Gastrocnemius medialis (tissue), 4 donors: ENCODE measurements at regions of chr16 and their contacts with region 1.

Region 1: DNA sequence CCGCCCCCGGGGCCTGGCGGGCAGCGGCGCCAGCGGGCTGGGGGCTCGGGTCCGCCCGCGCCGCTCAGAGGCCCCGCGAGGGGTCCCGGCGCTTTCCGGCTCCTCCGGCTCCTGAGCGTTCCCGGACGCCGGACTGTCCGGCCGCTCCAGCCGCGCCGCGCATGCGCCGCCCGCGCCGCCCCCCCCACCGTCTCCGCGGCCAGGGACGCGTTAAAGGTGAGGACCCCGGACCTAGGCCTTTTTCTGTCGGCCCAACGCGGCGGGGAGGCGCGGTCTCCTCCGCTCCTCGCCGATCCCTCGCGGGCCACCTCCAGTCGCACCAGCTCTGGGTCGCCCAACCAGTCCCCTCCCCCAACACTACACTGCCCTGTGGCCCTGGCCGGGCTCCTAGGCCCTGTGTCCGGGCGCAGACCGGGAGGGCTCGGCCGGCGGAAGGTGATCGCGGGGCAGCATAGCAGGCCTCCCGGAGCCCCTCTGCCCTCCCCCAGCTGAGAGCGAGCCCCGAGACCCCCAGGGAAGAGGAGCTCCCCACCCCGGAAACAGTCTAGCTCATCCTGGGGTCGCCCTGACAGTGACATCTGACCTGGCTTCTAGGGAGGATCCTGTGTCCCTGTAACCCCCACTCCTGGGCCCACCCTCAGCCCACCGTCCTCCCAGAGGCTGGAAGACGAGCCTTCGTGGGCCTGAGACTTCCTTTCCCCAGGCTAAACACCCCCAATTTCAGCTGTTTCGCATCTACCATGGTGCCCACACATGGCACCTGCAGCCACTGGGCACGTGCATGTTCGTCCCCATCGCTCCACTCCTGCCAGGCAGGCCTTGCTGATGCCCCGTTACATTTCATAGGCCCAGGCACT is 14.6 kb upstream of the BCAR1 start:
- DNase-seq: peak; percentile 70 to 86
- ATAC-seq: peak; percentile 37 to 51
- H3K4me3 ChIP-seq: peak overlapping the region; percentile 75 to 97 (median 90)
- H3K27ac ChIP-seq: peak overlapping the region; percentile 95 to 100 (median 98)
- H3K4me1 ChIP-seq: peaks cover 56 to 62% of the 10 kb centered on the region in 2 donors
- H3K27me3 ChIP-seq: no peaks in the 10 kb centered on the region
- CTCF ChIP-seq: no peak
- POLR2A ChIP-seq: peak; percentile 97 to 98

Region 2: GRCh38 chr16:75254359-75254843 is 11.7 kb before region 1 on chr16:
- in situ Hi-C with region 1: no loop called
- intact Hi-C with region 1: loop called (anchors 1 kb)
- DNase-seq: peak; percentile 89 to 97
- ATAC-seq: peak; percentile 60 to 63
- H3K4me3 ChIP-seq: peak overlapping the region in 1 of 4 donors; percentile 15
- H3K27ac ChIP-seq: peak overlapping the region; percentile 97 to 99 (median 98)
- H3K4me1 ChIP-seq: peaks cover 87% of the 10 kb centered on the region in 2 donors
- H3K27me3 ChIP-seq: no peaks in the 10 kb centered on the region
- CTCF ChIP-seq: no peak
- POLR2A ChIP-seq: peak in 1 of 2 donors; percentile 43

Region 3: DNA sequence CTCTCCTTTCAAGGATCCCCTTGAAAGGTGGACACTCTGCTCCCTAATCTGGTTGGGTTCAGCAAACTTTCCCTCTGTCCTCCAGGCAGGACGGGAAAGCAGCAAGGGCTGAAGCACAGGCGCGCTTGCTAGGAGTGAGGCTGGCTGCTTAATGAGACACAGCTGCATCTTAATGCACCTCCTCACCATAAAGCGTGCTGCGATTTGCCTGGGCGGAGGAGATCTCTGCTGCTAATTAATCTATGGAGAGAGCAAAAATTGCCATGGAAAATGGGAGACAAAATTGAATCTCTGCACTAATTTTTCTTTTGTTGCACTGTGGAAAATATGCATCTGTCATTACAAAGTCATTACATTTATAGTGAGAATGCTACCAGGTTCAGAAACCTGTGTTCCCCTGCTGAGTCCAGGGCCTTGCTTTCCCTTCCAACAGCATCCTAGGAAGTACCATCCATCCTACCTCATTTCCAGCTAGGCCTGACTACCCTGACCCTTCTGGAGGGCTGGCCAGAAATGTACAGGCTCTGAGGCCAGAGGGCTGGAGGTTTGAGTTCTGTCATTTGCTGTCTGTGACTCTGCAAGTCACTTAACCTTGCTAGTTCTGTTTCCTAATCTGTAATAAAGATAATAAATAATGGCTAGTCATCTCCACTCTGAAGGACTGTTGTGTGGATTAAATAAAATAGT is 28.8 kb after region 1 on chr16:
- in situ Hi-C with region 1: no loop called
- intact Hi-C with region 1: no loop called
- DNase-seq: no peak
- ATAC-seq: no peak
- H3K4me3 ChIP-seq: no peak overlapping the region
- H3K27ac ChIP-seq: no peak overlapping the region
- H3K4me1 ChIP-seq: no peaks in the 10 kb centered on the region
- H3K27me3 ChIP-seq: no peaks in the 10 kb centered on the region
- CTCF ChIP-seq: no peak
- POLR2A ChIP-seq: no peak

Region 4: DNA sequence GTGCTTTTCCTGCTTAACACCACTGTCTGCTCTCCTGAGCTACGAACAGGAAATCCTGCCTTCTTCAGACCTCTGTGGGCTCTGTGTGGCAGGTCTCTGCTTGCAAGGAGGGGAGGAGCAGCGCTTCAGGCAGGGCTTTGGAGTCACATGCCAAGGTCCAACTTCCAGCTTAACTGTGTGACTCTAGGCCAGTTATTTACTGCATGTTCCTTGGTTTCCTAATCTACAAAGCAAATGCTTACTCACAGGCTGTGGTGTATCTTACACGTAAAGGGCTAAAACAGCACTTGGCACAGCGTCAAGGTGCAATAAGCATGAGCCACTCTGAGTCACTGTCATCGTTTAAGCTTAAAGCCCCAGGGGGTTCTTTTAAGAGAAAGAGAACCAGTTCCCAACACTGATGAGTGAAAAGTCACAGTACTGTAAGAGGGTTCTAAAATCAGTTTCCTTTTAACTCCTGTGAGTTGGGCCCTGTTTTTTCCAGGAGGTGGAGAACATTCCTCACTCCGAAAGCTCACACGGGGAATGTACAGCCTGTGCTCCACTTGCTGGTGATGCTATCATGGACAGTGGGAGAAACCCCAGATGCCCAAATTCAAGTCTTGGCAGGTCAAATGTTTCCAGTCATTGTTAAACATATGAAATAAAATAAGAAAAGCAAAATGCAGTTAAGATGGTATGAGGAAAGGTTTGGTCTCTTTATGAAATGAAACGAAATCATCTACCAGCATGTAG is 39.5 kb after region 1 on chr16:
- in situ Hi-C with region 1: no loop called
- intact Hi-C with region 1: loop called (anchors 1 kb)
- DNase-seq: peak; percentile 87 to 95
- ATAC-seq: peak; percentile 97 to 98
- H3K4me3 ChIP-seq: peak overlapping the region in 3 of 4 donors; percentile 4 to 21 (median 12)
- H3K27ac ChIP-seq: peak overlapping the region; percentile 86 to 91 (median 90)
- H3K4me1 ChIP-seq: peaks cover 26 to 27% of the 10 kb centered on the region in 2 donors
- H3K27me3 ChIP-seq: no peaks in the 10 kb centered on the region
- CTCF ChIP-seq: no peak
- POLR2A ChIP-seq: peak; percentile 61 to 73